Activated CD8-positive, alpha-beta T cell treated with anti-CD3 and anti-CD28 coated beads for 36 hours (primary cell): ENCODE measurements at regions of chr2 and their contacts with region 1.

Region 1: GRCh38 chr2:73926493-73927338 is at the start of gene DGUOK:
- DNase-seq: peak; percentile 99
- ATAC-seq: peak; percentile 99
- H3K4me3 Mint-ChIP-seq: peak within 1 kb of the TSS; percentile 93
- H3K27ac Mint-ChIP-seq: peak within 1 kb of the TSS; percentile 96
- H3K4me1 Mint-ChIP-seq: peaks cover 48% of the 10 kb centered on the region
- H3K27me3 Mint-ChIP-seq: no peaks in the 10 kb centered on the region
- CTCF ChIP-seq: no peak
- total RNA-seq, gene DGUOK: 96.4 to 103 TPM

Region 2: DNA sequence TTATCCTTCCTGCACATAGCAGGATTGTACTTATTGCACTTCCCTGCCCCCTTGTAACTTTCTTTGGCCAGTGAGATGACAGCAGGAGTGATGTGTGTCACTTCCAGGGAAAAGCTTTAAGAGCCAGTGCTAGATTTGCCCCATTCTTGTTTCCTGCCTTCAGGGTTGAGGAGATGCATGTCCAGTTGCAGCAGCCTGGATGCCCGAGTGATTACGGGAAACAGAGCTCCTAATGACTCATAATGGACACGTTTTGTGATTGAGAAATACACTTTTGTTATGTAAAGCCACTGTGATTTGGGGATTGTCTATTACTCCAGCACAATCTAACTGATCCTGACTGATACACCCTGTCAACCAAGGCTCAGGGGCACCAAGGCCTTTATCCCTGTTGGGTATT is 53.0 kb after region 1 on chr2:
- CTCF ChIA-PET with region 1: no interaction called
- POLR2A ChIA-PET with region 1: interaction called, 3 read pairs
- intact Hi-C with region 1: loop called (anchors 5 kb)
- DNase-seq: no peak
- ATAC-seq: no peak
- H3K4me3 Mint-ChIP-seq: peak overlapping the region; percentile 72
- H3K27ac Mint-ChIP-seq: peak overlapping the region; percentile 84
- H3K4me1 Mint-ChIP-seq: peaks cover 81% of the 10 kb centered on the region
- H3K27me3 Mint-ChIP-seq: no peaks in the 10 kb centered on the region
- CTCF ChIP-seq: no peak

Region 3: GRCh38 chr2:74029714-74030397 is 103.1 kb after region 1 on chr2:
- CTCF ChIA-PET with region 1: no interaction called
- POLR2A ChIA-PET with region 1: no interaction called
- intact Hi-C with region 1: no loop called
- DNase-seq: no peak
- ATAC-seq: no peak
- H3K4me3 Mint-ChIP-seq: no peak overlapping the region
- H3K27ac Mint-ChIP-seq: peak overlapping the region; percentile 96
- H3K4me1 Mint-ChIP-seq: peaks cover 80% of the 10 kb centered on the region
- H3K27me3 Mint-ChIP-seq: no peaks in the 10 kb centered on the region
- CTCF ChIP-seq: no peak